ENCODE measurements at regions of chr1 and their contacts with region 1.

Region 1: GRCh38 chr1:147494998-147495580 is 46.2 kb upstream of the BCL9 start:
- DNase-seq: peak; percentile 63
- H3K4me3 ChIP-seq: no peak overlapping the region
- H3K27ac ChIP-seq: no peak overlapping the region
- H3K4me1 ChIP-seq: peaks cover 3% of the 10 kb centered on the region
- H3K27me3 ChIP-seq: peaks cover 3 to 9% of the 10 kb centered on the region in 2 experiments
- CTCF ChIP-seq: peak; percentile 84 to 85
- POLR2A ChIP-seq: no peak

Region 2: GRCh38 chr1:147273409-147274336 is 221.4 kb before region 1 on chr1:
- CTCF ChIA-PET with region 1: interaction called, 18 read pairs
- POLR2A ChIA-PET with region 1: no interaction called
- dilution Hi-C with region 1: no loop called
- intact Hi-C with region 1: loop called (anchors 2 kb)
- DNase-seq: peak; percentile 77
- H3K4me3 ChIP-seq: no peak overlapping the region
- H3K27ac ChIP-seq: peak overlapping the region; percentile 48
- H3K4me1 ChIP-seq: peaks cover 14% of the 10 kb centered on the region
- H3K27me3 ChIP-seq: no peaks in the 10 kb centered on the region
- CTCF ChIP-seq: peak; percentile 28 to 35
- POLR2A ChIP-seq: no peak

Region 3: GRCh38 chr1:147541672-147542568 is 46.8 kb after region 1 on chr1:
- CTCF ChIA-PET with region 1: interaction called, 26 read pairs
- POLR2A ChIA-PET with region 1: no interaction called
- dilution Hi-C with region 1: no loop called
- intact Hi-C with region 1: loop called (anchors 1 kb)
- DNase-seq: no peak
- H3K4me3 ChIP-seq: peak overlapping the region; percentile 46 to 85 (median 64)
- H3K27ac ChIP-seq: peak overlapping the region; percentile 75
- H3K4me1 ChIP-seq: peaks cover 19% of the 10 kb centered on the region
- H3K27me3 ChIP-seq: no peaks in the 10 kb centered on the region
- CTCF ChIP-seq: no peak
- POLR2A ChIP-seq: peak; percentile 48

Region 4: DNA sequence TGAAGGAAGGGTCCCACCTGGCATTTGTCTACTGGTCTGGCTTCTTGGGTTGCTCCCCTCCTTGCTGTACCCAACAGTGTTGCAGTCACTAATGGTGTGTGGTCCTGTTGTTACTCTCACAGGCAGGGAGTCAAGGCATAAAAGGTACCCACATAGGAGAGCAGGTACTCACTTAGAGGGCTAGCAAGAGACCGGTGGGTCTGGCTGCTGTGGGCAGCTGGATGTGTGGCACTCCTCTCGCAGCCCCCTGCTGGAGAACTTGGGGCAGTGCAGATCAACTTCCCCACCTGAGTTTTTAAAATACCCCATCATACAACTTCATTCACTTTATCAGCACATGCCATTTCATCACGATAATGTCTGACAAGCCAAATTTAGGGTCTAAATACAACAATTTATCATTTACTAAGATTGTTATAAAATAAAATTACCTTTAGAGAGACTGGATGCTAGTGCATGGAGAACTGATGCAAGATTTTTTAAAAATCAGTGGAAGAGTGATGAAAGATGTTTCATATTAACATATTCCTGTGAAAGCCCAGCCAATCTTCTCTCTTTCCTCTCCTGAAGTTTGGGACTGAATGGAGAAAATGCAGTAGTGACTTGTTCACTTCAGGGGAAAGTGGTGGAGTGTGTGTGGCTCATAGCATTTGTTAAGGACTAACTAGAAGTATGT is 132.5 kb after region 1 on chr1:
- CTCF ChIA-PET with region 1: interaction called, 44 read pairs
- POLR2A ChIA-PET with region 1: interaction called, 3 read pairs
- dilution Hi-C with region 1: no loop called
- intact Hi-C with region 1: loop called (anchors 1 kb)
- DNase-seq: peak; percentile 48
- H3K4me3 ChIP-seq: no peak overlapping the region
- H3K27ac ChIP-seq: no peak overlapping the region
- H3K4me1 ChIP-seq: peaks cover 6% of the 10 kb centered on the region
- H3K27me3 ChIP-seq: no peaks in the 10 kb centered on the region
- CTCF ChIP-seq: peak; percentile 86 to 92
- POLR2A ChIP-seq: no peak

Region 5: GRCh38 chr1:147700042-147701006 is 205.2 kb after region 1 on chr1:
- CTCF ChIA-PET with region 1: interaction called, 5 read pairs
- POLR2A ChIA-PET with region 1: no interaction called
- dilution Hi-C with region 1: no loop called
- intact Hi-C with region 1: loop called (anchors 2 kb)
- DNase-seq: peak; percentile 65
- H3K4me3 ChIP-seq: no peak overlapping the region
- H3K27ac ChIP-seq: no peak overlapping the region
- H3K4me1 ChIP-seq: no peaks in the 10 kb centered on the region
- H3K27me3 ChIP-seq: peaks cover 0 to 3% of the 10 kb centered on the region in 2 experiments
- CTCF ChIP-seq: peak; percentile 87
- POLR2A ChIP-seq: no peak